Panc1 (cell line): ENCODE measurements at regions of chr6 and their contacts with region 1.

Region 1: GRCh38 chr6:158500016-158500735 is 59.7 kb upstream of the TMEM181 start:
- DNase-seq: no peak
- ATAC-seq: no peak
- H3K4me3 ChIP-seq: no peak overlapping the region
- H3K27ac ChIP-seq: no peak overlapping the region
- H3K4me1 ChIP-seq: no peaks in the 10 kb centered on the region
- H3K27me3 ChIP-seq: no peaks in the 10 kb centered on the region
- CTCF ChIP-seq: no peak

Region 2: GRCh38 chr6:157974341-157974894 is 525.8 kb before region 1 on chr6:
- CTCF ChIA-PET with region 1: no interaction called
- POLR2A ChIA-PET with region 1: no interaction called
- in situ Hi-C with region 1: no loop called
- intact Hi-C with region 1: no loop called
- DNase-seq: no peak
- ATAC-seq: peak; percentile 49; the same call in 1 of the 2 replicates
- H3K4me3 ChIP-seq: no peak overlapping the region
- H3K27ac ChIP-seq: peak overlapping the region; percentile 72; the same call in 1 of the 2 replicates
- H3K4me1 ChIP-seq: peaks cover 7% of the 10 kb centered on the region
- H3K27me3 ChIP-seq: no peaks in the 10 kb centered on the region
- CTCF ChIP-seq: no peak

Region 3: DNA sequence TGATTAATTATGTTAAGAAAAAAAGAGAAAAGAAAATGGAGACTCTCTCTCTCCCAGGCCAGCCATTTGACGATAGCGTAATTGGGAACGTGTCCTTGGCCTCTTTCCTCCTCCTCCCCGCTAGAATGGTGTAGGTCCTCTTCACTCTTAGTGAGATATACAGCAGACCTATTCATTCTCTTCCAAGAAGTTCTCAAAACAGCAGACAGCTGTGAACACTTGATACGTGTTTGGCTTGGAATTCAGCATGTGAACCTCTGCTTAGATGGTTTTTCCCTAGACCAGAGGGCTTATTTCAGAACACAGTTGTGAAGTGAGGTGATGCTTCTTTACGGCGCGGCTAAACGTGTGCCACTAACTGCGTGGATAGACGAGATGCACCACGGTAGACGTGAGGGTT is 220.6 kb before region 1 on chr6:
- CTCF ChIA-PET with region 1: no interaction called
- POLR2A ChIA-PET with region 1: no interaction called
- in situ Hi-C with region 1: no loop called
- intact Hi-C with region 1: loop called (anchors 5 kb)
- DNase-seq: no peak
- ATAC-seq: no peak
- H3K4me3 ChIP-seq: no peak overlapping the region
- H3K27ac ChIP-seq: no peak overlapping the region
- H3K4me1 ChIP-seq: no peaks in the 10 kb centered on the region
- H3K27me3 ChIP-seq: no peaks in the 10 kb centered on the region
- CTCF ChIP-seq: no peak

Region 4: GRCh38 chr6:158452182-158452581 is 48.0 kb before region 1 on chr6:
- CTCF ChIA-PET with region 1: no interaction called
- POLR2A ChIA-PET with region 1: no interaction called
- in situ Hi-C with region 1: no loop called
- intact Hi-C with region 1: no loop called
- DNase-seq: no peak
- ATAC-seq: no peak
- H3K4me3 ChIP-seq: no peak overlapping the region
- H3K27ac ChIP-seq: no peak overlapping the region
- H3K4me1 ChIP-seq: no peaks in the 10 kb centered on the region
- H3K27me3 ChIP-seq: no peaks in the 10 kb centered on the region
- CTCF ChIP-seq: no peak

Region 5: GRCh38 chr6:158559895-158560835 is 60.0 kb after region 1 on chr6 and contains the start of gene TMEM181:
- CTCF ChIA-PET with region 1: no interaction called
- POLR2A ChIA-PET with region 1: no interaction called
- in situ Hi-C with region 1: no loop called
- intact Hi-C with region 1: no loop called
- DNase-seq: peak; percentile 25
- ATAC-seq: peak; percentile 91
- H3K4me3 ChIP-seq: peak within 1 kb of the TSS; percentile 72 to 86
- H3K27ac ChIP-seq: peak within 1 kb of the TSS; percentile 94
- H3K4me1 ChIP-seq: peaks cover 23% of the 10 kb centered on the region
- H3K27me3 ChIP-seq: no peaks in the 10 kb centered on the region
- CTCF ChIP-seq: no peak
- total RNA-seq, gene TMEM181: 38.0 TPM